MCF 10A (cell line): ENCODE measurements at regions of chr5 and their contacts with region 1.

Region 1: GRCh38 chr5:38382898-38383297 is 124.5 kb downstream of the EGFLAM start:
- DNase-seq: peak; percentile 85
- H3K4me3 Mint-ChIP-seq: no peak overlapping the region
- H3K27ac Mint-ChIP-seq: no peak overlapping the region
- H3K4me1 Mint-ChIP-seq: no peaks in the 10 kb centered on the region
- H3K27me3 Mint-ChIP-seq: peaks cover 17% of the 10 kb centered on the region
- CTCF ChIP-seq: peak; percentile 84

Region 2: GRCh38 chr5:37774912-37775483 is 607.9 kb before region 1 on chr5:
- CTCF ChIA-PET with region 1: no interaction called
- POLR2A ChIA-PET with region 1: no interaction called
- intact Hi-C with region 1: no loop called
- DNase-seq: peak; percentile 20
- H3K4me3 Mint-ChIP-seq: no peak overlapping the region
- H3K27ac Mint-ChIP-seq: no peak overlapping the region
- H3K4me1 Mint-ChIP-seq: peaks cover 13% of the 10 kb centered on the region
- H3K27me3 Mint-ChIP-seq: no peaks in the 10 kb centered on the region
- CTCF ChIP-seq: peak; percentile 52

Region 3: DNA sequence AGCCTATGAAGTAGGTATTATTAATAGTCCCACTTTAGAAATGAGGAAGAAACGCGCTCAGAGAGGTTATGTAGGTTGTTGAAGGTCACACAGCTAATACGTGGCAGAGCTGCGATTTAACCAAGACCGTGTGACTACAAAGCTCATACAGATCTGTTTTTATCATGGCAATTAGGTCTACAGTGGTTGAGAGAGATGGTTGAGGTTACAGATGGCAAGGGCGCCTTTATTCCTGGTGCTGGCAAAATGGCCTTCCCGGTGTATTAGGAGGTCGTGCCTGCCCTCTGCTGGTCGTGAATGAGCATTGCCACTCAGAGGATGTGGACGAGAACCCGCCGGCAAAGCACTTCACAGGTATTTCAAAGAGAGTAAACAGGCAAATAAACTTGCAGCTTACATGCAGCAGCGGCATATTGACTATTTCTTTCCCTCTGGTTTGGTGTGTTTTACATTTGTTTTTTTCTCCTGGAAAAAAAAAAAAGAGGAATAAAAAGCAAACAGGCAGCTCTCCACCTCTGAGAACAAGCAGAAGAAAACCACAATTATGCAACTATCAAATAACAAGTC is 189.8 kb before region 1 on chr5:
- CTCF ChIA-PET with region 1: no interaction called
- POLR2A ChIA-PET with region 1: no interaction called
- intact Hi-C with region 1: no loop called
- DNase-seq: peak; percentile 69
- H3K4me3 Mint-ChIP-seq: no peak overlapping the region
- H3K27ac Mint-ChIP-seq: no peak overlapping the region
- H3K4me1 Mint-ChIP-seq: no peaks in the 10 kb centered on the region
- H3K27me3 Mint-ChIP-seq: peaks cover 21% of the 10 kb centered on the region
- CTCF ChIP-seq: peak; percentile 93

Region 4: GRCh38 chr5:38208782-38209378 is 174.0 kb before region 1 on chr5:
- CTCF ChIA-PET with region 1: interaction called, 4 read pairs
- POLR2A ChIA-PET with region 1: no interaction called
- intact Hi-C with region 1: loop called (anchors 5 kb)
- DNase-seq: peak; percentile 66
- H3K4me3 Mint-ChIP-seq: no peak overlapping the region
- H3K27ac Mint-ChIP-seq: no peak overlapping the region
- H3K4me1 Mint-ChIP-seq: peaks cover 11% of the 10 kb centered on the region
- H3K27me3 Mint-ChIP-seq: peaks cover 44% of the 10 kb centered on the region
- CTCF ChIP-seq: peak; percentile 77

Region 5: DNA sequence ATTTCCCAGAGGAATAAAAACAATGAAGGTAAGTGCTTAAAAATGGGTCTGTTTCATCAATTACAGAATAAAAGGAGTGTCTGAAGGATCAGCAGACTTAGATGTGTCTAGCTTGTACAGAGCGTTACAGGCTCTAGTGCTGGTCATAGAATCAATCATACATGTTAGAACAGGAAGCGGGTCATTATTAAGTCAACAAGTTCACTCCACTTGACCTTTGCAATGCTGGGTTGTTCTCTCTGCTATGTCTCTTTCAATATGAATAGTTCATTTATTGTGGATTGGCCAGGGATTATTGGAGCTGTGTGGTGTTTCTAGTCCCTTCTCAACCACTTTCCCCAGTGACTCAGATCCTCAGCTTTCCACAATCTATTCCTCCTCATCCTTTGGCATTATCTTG is 145.2 kb before region 1 on chr5:
- CTCF ChIA-PET with region 1: no interaction called
- POLR2A ChIA-PET with region 1: no interaction called
- intact Hi-C with region 1: no loop called
- DNase-seq: no peak
- H3K4me3 Mint-ChIP-seq: no peak overlapping the region
- H3K27ac Mint-ChIP-seq: no peak overlapping the region
- H3K4me1 Mint-ChIP-seq: no peaks in the 10 kb centered on the region
- H3K27me3 Mint-ChIP-seq: no peaks in the 10 kb centered on the region
- CTCF ChIP-seq: no peak

Region 6: DNA sequence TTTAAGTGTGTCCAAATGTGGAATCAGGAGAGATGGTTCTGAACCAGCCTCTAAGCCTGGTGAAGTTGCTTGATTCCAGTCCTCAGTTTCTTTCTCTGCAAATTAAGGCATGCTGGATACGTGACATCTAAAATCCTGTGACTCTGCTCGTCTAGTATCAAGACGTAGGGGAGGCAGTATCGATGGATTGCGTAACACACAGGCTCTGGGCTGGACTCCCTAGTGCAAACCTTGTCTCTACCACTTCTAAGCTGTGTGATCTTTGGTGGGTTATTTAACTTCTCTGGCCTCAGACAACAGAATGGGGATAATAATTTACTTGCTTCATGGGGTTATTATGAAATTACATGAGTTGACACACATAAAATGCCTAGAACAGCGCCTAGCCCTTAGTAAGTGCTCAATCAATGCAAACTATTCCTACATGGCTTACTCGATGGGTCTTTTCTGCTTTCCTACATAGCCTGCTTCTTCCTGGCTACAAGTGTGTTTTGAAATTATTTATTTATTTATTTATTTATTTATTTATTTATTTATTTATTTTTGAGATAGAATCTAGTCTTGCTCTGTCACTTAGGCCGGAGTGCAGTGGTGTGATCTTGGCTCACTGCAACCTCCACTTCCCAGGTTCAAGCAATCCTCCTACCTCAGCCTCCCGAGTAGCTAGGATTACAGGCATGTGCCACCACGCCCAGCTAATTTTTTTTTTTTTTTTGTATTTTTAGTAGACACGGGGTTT is 22.4 kb before region 1 on chr5:
- CTCF ChIA-PET with region 1: interaction called, 26 read pairs
- POLR2A ChIA-PET with region 1: no interaction called
- intact Hi-C with region 1: no loop called
- DNase-seq: no peak
- H3K4me3 Mint-ChIP-seq: no peak overlapping the region
- H3K27ac Mint-ChIP-seq: no peak overlapping the region
- H3K4me1 Mint-ChIP-seq: no peaks in the 10 kb centered on the region
- H3K27me3 Mint-ChIP-seq: no peaks in the 10 kb centered on the region
- CTCF ChIP-seq: no peak

Region 7: GRCh38 chr5:38404667-38405276 is 21.9 kb after region 1 on chr5:
- CTCF ChIA-PET with region 1: interaction called, 11 read pairs
- POLR2A ChIA-PET with region 1: interaction called, 3 read pairs
- intact Hi-C with region 1: no loop called
- DNase-seq: peak; percentile 60
- H3K4me3 Mint-ChIP-seq: no peak overlapping the region
- H3K27ac Mint-ChIP-seq: no peak overlapping the region
- H3K4me1 Mint-ChIP-seq: peaks cover 6% of the 10 kb centered on the region
- H3K27me3 Mint-ChIP-seq: peaks cover 38% of the 10 kb centered on the region
- CTCF ChIP-seq: peak; percentile 13

Region 8: DNA sequence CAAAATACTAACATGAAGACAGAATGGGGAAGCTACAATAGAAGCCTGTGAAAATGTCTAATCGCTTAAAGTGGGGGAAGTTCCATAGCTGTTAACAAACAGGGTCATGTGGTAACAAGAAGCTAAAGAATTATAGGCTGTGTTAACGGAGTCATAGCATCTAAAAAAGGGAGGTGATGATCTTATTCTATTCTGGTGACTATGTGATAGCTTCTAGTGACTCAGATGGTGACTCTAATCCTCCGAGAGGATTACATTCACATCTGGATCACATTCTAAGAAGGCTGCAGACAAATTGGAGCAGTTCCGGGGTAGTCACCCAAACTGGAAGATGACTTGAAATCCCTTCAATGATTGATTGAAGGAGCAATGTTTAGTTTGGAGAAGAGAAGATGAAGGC is 31.4 kb after region 1 on chr5:
- CTCF ChIA-PET with region 1: interaction called, 24 read pairs
- POLR2A ChIA-PET with region 1: no interaction called
- intact Hi-C with region 1: no loop called
- DNase-seq: no peak
- H3K4me3 Mint-ChIP-seq: no peak overlapping the region
- H3K27ac Mint-ChIP-seq: no peak overlapping the region
- H3K4me1 Mint-ChIP-seq: no peaks in the 10 kb centered on the region
- H3K27me3 Mint-ChIP-seq: no peaks in the 10 kb centered on the region
- CTCF ChIP-seq: no peak